HCT116 (cell line): ENCODE measurements at regions of chr7 and their contacts with region 1.

Region 1: GRCh38 chr7:141014524-141015395 is at the start of gene MRPS33:
- DNase-seq: peak; percentile 91
- ATAC-seq: peak; percentile 99
- H3K4me3 ChIP-seq: peak within 1 kb of the TSS; percentile 66 to 80
- H3K27ac ChIP-seq: peak within 1 kb of the TSS; percentile 59
- H3K4me1 ChIP-seq: peaks cover 5 to 20% of the 10 kb centered on the region in 2 experiments; a peak in 3 of 4 replicates
- H3K27me3 ChIP-seq: no peaks in the 10 kb centered on the region
- CTCF ChIP-seq: peak; percentile 54 to 92 (median 69)
- POLR2A ChIP-seq: peak; percentile 76
- RAD21 ChIP-seq: no peak
- total RNA-seq, gene MRPS33: 77.3 TPM

Region 2: DNA sequence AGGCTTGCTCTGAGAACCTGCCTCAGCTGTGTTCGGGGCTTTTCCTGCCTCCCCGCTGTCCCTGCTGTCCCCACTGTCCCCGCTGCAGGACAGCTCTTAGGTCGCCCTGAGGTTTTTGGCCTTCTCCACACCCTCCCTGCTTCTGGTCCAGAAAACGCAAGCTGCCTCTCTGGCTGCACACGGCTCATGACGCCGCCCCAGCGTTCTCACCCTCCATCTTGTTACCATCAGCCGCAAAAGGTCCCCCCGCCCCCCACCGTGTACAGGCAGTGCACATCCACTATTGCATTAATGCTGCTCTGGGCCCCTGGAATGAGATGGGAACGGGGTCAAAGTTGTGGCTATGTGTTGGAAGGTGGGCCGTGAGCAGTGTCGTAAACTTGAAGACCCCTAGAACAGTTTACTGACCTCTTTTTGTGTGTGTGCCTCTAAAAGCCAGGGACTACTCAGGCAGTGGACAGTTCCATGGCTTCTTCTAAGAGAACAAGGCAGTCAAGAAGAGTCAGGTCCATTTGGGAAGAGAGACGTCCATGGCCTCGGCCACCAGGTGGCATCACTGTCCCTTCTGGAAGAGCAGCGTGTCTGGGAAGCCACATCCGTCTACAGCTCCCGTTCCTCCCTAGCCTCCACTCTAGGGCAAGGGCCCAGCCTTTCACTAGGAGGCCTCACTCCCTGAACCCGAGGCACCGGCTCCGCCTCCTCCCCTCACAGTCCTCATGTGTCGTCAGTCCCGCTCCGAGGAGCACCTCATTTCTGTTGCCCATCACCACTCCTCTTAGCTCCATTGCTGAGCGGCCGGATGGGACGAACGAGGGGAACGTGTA is 497.0 kb before region 1 on chr7:
- CTCF ChIA-PET with region 1: interaction called, 4 read pairs
- POLR2A ChIA-PET with region 1: interaction called, 3 read pairs
- RAD21 ChIA-PET with region 1: no interaction called
- intact Hi-C with region 1: loop called (anchors 1 kb)
- DNase-seq: peak; percentile 86
- ATAC-seq: peak; percentile 96
- H3K4me3 ChIP-seq: no peak overlapping the region
- H3K27ac ChIP-seq: no peak overlapping the region
- H3K4me1 ChIP-seq: peaks cover 6 to 12% of the 10 kb centered on the region in 2 experiments; a peak in 3 of 4 replicates
- H3K27me3 ChIP-seq: no peaks in the 10 kb centered on the region
- CTCF ChIP-seq: peak; percentile 76 to 96 (median 90)
- POLR2A ChIP-seq: no peak
- RAD21 ChIP-seq: peak; percentile 99

Region 3: GRCh38 chr7:140726281-140726680 is 288.5 kb before region 1 on chr7:
- CTCF ChIA-PET with region 1: interaction called, 3 read pairs
- POLR2A ChIA-PET with region 1: no interaction called
- RAD21 ChIA-PET with region 1: no interaction called
- intact Hi-C with region 1: loop called (anchors 1 kb)
- DNase-seq: peak; percentile 7
- ATAC-seq: peak; percentile 58; the same call in 1 of the 2 replicates
- H3K4me3 ChIP-seq: no peak overlapping the region
- H3K27ac ChIP-seq: no peak overlapping the region
- H3K4me1 ChIP-seq: no peaks in the 10 kb centered on the region
- H3K27me3 ChIP-seq: no peaks in the 10 kb centered on the region
- CTCF ChIP-seq: peak; percentile 15 to 56 (median 46); a peak in 5 of 6 replicates
- POLR2A ChIP-seq: no peak
- RAD21 ChIP-seq: peak; percentile 37; the same call in 1 of the 2 replicates

Region 4: GRCh38 chr7:140924019-140924820 is 90.5 kb before region 1 on chr7:
- CTCF ChIA-PET with region 1: interaction called, 4 read pairs
- POLR2A ChIA-PET with region 1: no interaction called
- RAD21 ChIA-PET with region 1: no interaction called
- intact Hi-C with region 1: loop called (anchors 2 kb)
- DNase-seq: peak; percentile 32
- ATAC-seq: peak; percentile 85
- H3K4me3 ChIP-seq: peak overlapping the region; percentile 88
- H3K27ac ChIP-seq: peak overlapping the region; percentile 89
- H3K4me1 ChIP-seq: peaks cover 0 to 14% of the 10 kb centered on the region in 2 experiments; a peak in 3 of 4 replicates
- H3K27me3 ChIP-seq: no peaks in the 10 kb centered on the region
- CTCF ChIP-seq: peak in 2 of 3 experiments; percentile 50 to 57; a peak in 5 of 6 replicates
- POLR2A ChIP-seq: no peak
- RAD21 ChIP-seq: no peak

Region 5: GRCh38 chr7:140961117-140961516 is 53.6 kb before region 1 on chr7:
- CTCF ChIA-PET with region 1: no interaction called
- POLR2A ChIA-PET with region 1: no interaction called
- RAD21 ChIA-PET with region 1: no interaction called
- intact Hi-C with region 1: no loop called
- DNase-seq: no peak
- ATAC-seq: no peak
- H3K4me3 ChIP-seq: no peak overlapping the region
- H3K27ac ChIP-seq: no peak overlapping the region
- H3K4me1 ChIP-seq: no peaks in the 10 kb centered on the region
- H3K27me3 ChIP-seq: no peaks in the 10 kb centered on the region
- CTCF ChIP-seq: no peak
- POLR2A ChIP-seq: no peak
- RAD21 ChIP-seq: no peak

Region 6: GRCh38 chr7:141533149-141533949 is 518.6 kb after region 1 on chr7:
- CTCF ChIA-PET with region 1: no interaction called
- POLR2A ChIA-PET with region 1: no interaction called
- RAD21 ChIA-PET with region 1: no interaction called
- intact Hi-C with region 1: loop called (anchors 5 kb)
- DNase-seq: peak; percentile 48
- ATAC-seq: peak; percentile 89
- H3K4me3 ChIP-seq: no peak overlapping the region
- H3K27ac ChIP-seq: no peak overlapping the region
- H3K4me1 ChIP-seq: no peaks in the 10 kb centered on the region
- H3K27me3 ChIP-seq: peaks cover 13% of the 10 kb centered on the region; the same call in 1 of the 2 replicates
- CTCF ChIP-seq: peak; percentile 73 to 98 (median 96)
- POLR2A ChIP-seq: no peak
- RAD21 ChIP-seq: peak; percentile 89

Region 7: GRCh38 chr7:141737834-141738591 is 723.3 kb after region 1 on chr7 and contains the start of gene SSBP1:
- CTCF ChIA-PET with region 1: no interaction called
- POLR2A ChIA-PET with region 1: no interaction called
- RAD21 ChIA-PET with region 1: no interaction called
- intact Hi-C with region 1: loop called (anchors 2 kb)
- DNase-seq: peak; percentile 95
- ATAC-seq: peak; percentile 88
- H3K4me3 ChIP-seq: peak within 1 kb of the TSS; percentile 86 to 88
- H3K27ac ChIP-seq: peak within 1 kb of the TSS; percentile 66
- H3K4me1 ChIP-seq: peaks cover 4 to 13% of the 10 kb centered on the region in 2 experiments; a peak in 3 of 4 replicates
- H3K27me3 ChIP-seq: no peaks in the 10 kb centered on the region
- CTCF ChIP-seq: peak; percentile 68 to 97 (median 78)
- POLR2A ChIP-seq: peak; percentile 81
- RAD21 ChIP-seq: peak; percentile 64
- total RNA-seq, gene SSBP1: 171 TPM